Activated CD4-positive, alpha-beta T cell treated with anti-CD3 and anti-CD28 coated beads for 36 hours (primary cell): ENCODE measurements at regions of chr11 and their contacts with region 1.

Region 1: DNA sequence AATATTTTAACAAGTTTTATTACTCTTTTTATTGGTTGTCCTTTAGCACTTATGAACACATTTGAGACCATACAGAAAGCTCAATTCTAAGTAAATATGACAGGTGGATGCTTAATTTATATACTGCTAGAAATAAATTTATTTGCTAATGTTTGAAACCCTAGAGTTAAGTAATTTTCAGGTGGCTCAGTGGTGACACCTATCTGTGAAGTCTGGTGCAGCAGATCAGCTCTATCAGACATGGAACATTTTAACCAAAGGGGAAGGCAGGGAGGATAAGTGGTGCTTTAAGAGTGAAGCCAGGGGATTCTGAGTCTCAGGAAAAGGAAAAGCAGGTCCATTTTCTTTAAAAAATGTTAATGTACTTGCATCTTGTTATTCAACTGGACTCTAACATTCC is 175.8 kb downstream of the DSCAML1 start:
- DNase-seq: peak; percentile 30
- ATAC-seq: no peak
- H3K4me3 Mint-ChIP-seq: no peak overlapping the region
- H3K27ac Mint-ChIP-seq: no peak overlapping the region
- H3K4me1 Mint-ChIP-seq: no peaks in the 10 kb centered on the region
- H3K27me3 Mint-ChIP-seq: peaks cover 4% of the 10 kb centered on the region

Region 2: GRCh38 chr11:117610901-117611300 is 10.3 kb before region 1 on chr11:
- CTCF ChIA-PET with region 1: interaction called, 15 read pairs
- POLR2A ChIA-PET with region 1: no interaction called
- intact Hi-C with region 1: no loop called
- DNase-seq: no peak
- ATAC-seq: no peak
- H3K4me3 Mint-ChIP-seq: no peak overlapping the region
- H3K27ac Mint-ChIP-seq: no peak overlapping the region
- H3K4me1 Mint-ChIP-seq: peaks cover 22% of the 10 kb centered on the region
- H3K27me3 Mint-ChIP-seq: peaks cover 10% of the 10 kb centered on the region